PC-3 (cell line): ENCODE measurements at regions of chr5 and their contacts with region 1.

Region 1: GRCh38 chr5:140647042-140647341 is 438 bp downstream of the NDUFA2 start:
- DNase-seq: no peak
- ATAC-seq: peak; percentile 12
- H3K4me3 ChIP-seq: peak overlapping the region; percentile 94
- H3K27ac ChIP-seq: no peak overlapping the region
- H3K4me1 ChIP-seq: peaks cover 6% of the 10 kb centered on the region; the same call in 1 of the 2 replicates
- H3K27me3 ChIP-seq: no peaks in the 10 kb centered on the region
- CTCF ChIP-seq: no peak

Region 2: GRCh38 chr5:140664359-140665119 is 17.5 kb after region 1 on chr5 and contains the start of gene WDR55:
- CTCF ChIA-PET with region 1: no interaction called
- POLR2A ChIA-PET with region 1: no interaction called
- intact Hi-C with region 1: loop called (anchors 1 kb)
- DNase-seq: peak; percentile 96
- ATAC-seq: peak; percentile 95
- H3K4me3 ChIP-seq: peak within 1 kb of the TSS; percentile 95
- H3K27ac ChIP-seq: peak within 1 kb of the TSS; percentile 87
- H3K4me1 ChIP-seq: peaks cover 20% of the 10 kb centered on the region
- H3K27me3 ChIP-seq: no peaks in the 10 kb centered on the region
- CTCF ChIP-seq: no peak
- total RNA-seq, gene WDR55: 21.2 and 27.2 TPM in 2 replicates

Region 3: DNA sequence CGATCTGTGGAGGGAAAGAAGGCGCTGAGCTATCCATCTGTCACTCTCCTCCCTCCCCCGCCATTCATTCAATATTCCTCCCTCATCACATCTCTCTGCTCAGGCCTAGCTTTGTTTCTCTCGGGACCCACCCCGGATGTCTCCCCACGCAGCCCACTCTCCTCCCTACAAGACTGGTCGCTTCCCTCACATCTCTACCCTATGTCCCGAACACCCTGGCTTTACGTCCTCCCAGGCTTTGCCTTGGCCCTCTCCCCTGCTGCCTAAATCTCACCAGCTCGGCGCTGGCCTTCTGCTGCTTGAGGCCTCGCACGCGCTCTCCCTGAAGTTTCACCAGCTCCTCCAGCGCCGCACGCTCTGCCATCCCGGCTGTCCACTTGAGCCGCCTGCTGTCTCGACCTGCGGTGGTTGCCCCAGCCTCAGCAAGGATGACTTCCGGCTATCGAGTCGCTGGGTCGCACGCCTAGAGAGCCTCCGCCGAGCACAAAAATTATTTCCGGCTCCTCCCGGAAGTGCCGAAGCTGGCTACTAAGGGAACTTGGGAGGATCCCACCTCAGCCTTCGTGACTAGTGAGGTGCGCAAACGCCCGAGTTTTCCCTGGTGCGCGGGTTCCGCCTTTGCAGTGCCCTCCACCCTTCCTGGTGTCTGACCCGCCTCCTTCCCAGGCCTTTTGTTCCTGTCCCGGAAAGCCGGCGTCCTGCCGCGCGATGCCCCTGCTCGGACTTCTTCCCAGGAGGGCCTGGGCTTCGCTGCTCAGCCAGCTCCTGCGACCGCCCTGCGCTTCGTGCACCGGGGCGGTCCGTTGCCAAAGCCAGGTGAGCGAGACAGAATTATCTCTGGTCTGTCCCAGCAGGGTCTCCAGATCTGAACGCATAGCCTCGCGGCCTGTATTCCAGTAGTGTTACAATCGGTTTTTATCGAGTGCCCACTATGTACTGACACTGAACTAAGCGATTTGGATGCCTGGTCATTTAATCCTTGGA is 44.2 kb after region 1 on chr5 and contains the starts of genes HARS1 and HARS2:
- CTCF ChIA-PET with region 1: no interaction called
- POLR2A ChIA-PET with region 1: no interaction called
- intact Hi-C with region 1: loop called (anchors 1 kb)
- DNase-seq: peak; percentile 94
- ATAC-seq: peak; percentile 94
- H3K4me3 ChIP-seq: peak within 1 kb of the TSS; percentile 92
- H3K27ac ChIP-seq: peak within 1 kb of the TSS; percentile 71
- H3K4me1 ChIP-seq: peaks cover 7% of the 10 kb centered on the region; the same call in 1 of the 2 replicates
- H3K27me3 ChIP-seq: no peaks in the 10 kb centered on the region
- CTCF ChIP-seq: no peak
- total RNA-seq, gene HARS1: 76.1 and 87.1 TPM in 2 replicates
- total RNA-seq, gene HARS2: 23.3 and 29.7 TPM in 2 replicates

Region 4: GRCh38 chr5:140700177-140701144 is 53.5 kb after region 1 on chr5 and contains the start of gene ZMAT2:
- CTCF ChIA-PET with region 1: no interaction called
- POLR2A ChIA-PET with region 1: interaction called, 20 read pairs
- intact Hi-C with region 1: no loop called
- DNase-seq: peak; percentile 94
- ATAC-seq: peak; percentile 99
- H3K4me3 ChIP-seq: peak within 1 kb of the TSS; percentile 90
- H3K27ac ChIP-seq: no peak within 1 kb of the TSS
- H3K4me1 ChIP-seq: peaks cover 6% of the 10 kb centered on the region
- H3K27me3 ChIP-seq: no peaks in the 10 kb centered on the region
- CTCF ChIP-seq: no peak
- total RNA-seq, gene ZMAT2: 28.2 and 36.8 TPM in 2 replicates

Region 5: GRCh38 chr5:140710899-140711552 is 64.0 kb after region 1 on chr5:
- CTCF ChIA-PET with region 1: no interaction called
- POLR2A ChIA-PET with region 1: no interaction called
- intact Hi-C with region 1: loop called (anchors 2 kb)
- DNase-seq: peak; percentile 99
- ATAC-seq: peak; percentile 94
- H3K4me3 ChIP-seq: peak overlapping the region; percentile 91
- H3K27ac ChIP-seq: peak overlapping the region; percentile 85
- H3K4me1 ChIP-seq: peaks cover 8% of the 10 kb centered on the region; the same call in 1 of the 2 replicates
- H3K27me3 ChIP-seq: no peaks in the 10 kb centered on the region
- CTCF ChIP-seq: no peak

Region 6: GRCh38 chr5:140718241-140718580 is 71.2 kb after region 1 on chr5:
- CTCF ChIA-PET with region 1: interaction called, 3 read pairs
- POLR2A ChIA-PET with region 1: no interaction called
- intact Hi-C with region 1: loop called (anchors 2 kb)
- DNase-seq: no peak
- ATAC-seq: no peak
- H3K4me3 ChIP-seq: peak overlapping the region; percentile 68
- H3K27ac ChIP-seq: peak overlapping the region; percentile 74
- H3K4me1 ChIP-seq: no peaks in the 10 kb centered on the region
- H3K27me3 ChIP-seq: no peaks in the 10 kb centered on the region
- CTCF ChIP-seq: no peak